Activated T-helper 1 cell treated with anti-CD3 and anti-CD28 coated beads, Interleukin-12 subunit alpha, Interleukin-12 subunit beta, Interleukin-2, Interleukin-4 antibody, amounts not matched to agents 30 ng/mL and 10 ng/mL and 1 ng/mL, durations not matched to agents 14 hours and 24 hours and 36 hours (primary cell): ENCODE measurements at regions of chr10 and their contacts with region 1.

Region 1: GRCh38 chr10:101441541-101442455 is 87.8 kb downstream of the BTRC start:
- DNase-seq: no peak
- H3K4me3 Mint-ChIP-seq: no peak overlapping the region
- H3K27ac Mint-ChIP-seq: no peak overlapping the region
- H3K4me1 Mint-ChIP-seq: no peaks in the 10 kb centered on the region
- H3K27me3 Mint-ChIP-seq: no peaks in the 10 kb centered on the region

Region 2: GRCh38 chr10:100986952-100987750 is 454.6 kb before region 1 on chr10 and contains the starts of genes MRPL43 and TWNK:
- intact Hi-C with region 1: no loop called
- DNase-seq: peak; percentile 80
- H3K4me3 Mint-ChIP-seq: peak within 1 kb of the TSS; percentile 98
- H3K27ac Mint-ChIP-seq: peak within 1 kb of the TSS; percentile 85
- H3K4me1 Mint-ChIP-seq: peaks cover 24% of the 10 kb centered on the region
- H3K27me3 Mint-ChIP-seq: no peaks in the 10 kb centered on the region
- total RNA-seq, gene MRPL43: 61.5 and 63.2 TPM in 2 replicates
- total RNA-seq, gene TWNK: 41.1 and 42.3 TPM in 2 replicates

Region 3: GRCh38 chr10:101161494-101162299 is 280.1 kb before region 1 on chr10:
- intact Hi-C with region 1: loop called (anchors 5 kb)
- DNase-seq: peak; percentile 44
- H3K4me3 Mint-ChIP-seq: no peak overlapping the region
- H3K27ac Mint-ChIP-seq: peak overlapping the region; percentile 30
- H3K4me1 Mint-ChIP-seq: peaks cover 11% of the 10 kb centered on the region
- H3K27me3 Mint-ChIP-seq: peaks cover 63% of the 10 kb centered on the region

Region 4: DNA sequence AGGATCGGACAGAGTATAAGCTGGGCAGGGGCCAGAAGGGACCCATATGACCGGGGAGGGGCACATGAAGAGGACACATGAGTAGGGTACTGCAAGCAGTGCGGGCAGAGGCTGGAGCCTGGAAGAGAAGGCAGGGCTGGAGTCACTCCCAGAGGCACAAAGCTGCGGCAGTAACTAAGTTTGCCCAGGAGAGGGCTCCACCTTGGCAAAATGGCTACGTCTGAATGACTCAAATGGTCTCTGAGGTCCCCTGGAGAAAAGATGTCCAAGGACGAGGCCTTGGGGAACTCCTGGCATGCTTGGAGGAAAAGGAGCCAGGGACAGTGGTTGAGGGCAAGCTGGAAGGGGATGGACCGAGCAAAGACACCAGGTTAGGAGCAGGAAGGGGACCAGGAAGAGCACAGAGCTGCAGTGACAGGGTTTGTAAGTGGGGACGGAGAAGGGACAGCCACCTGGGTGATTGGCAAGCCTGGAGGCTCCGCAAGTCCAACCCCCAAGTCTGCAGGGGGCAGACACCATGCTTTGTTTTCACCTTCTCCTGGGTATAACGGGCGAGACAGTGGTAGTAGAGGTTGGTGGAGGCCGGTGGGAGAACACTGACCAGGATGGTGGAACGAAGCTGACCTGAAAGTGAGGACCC is 169.4 kb before region 1 on chr10:
- intact Hi-C with region 1: loop called (anchors 1 kb)
- DNase-seq: peak; percentile 40
- H3K4me3 Mint-ChIP-seq: no peak overlapping the region
- H3K27ac Mint-ChIP-seq: no peak overlapping the region
- H3K4me1 Mint-ChIP-seq: no peaks in the 10 kb centered on the region
- H3K27me3 Mint-ChIP-seq: peaks cover 19% of the 10 kb centered on the region

Region 5: DNA sequence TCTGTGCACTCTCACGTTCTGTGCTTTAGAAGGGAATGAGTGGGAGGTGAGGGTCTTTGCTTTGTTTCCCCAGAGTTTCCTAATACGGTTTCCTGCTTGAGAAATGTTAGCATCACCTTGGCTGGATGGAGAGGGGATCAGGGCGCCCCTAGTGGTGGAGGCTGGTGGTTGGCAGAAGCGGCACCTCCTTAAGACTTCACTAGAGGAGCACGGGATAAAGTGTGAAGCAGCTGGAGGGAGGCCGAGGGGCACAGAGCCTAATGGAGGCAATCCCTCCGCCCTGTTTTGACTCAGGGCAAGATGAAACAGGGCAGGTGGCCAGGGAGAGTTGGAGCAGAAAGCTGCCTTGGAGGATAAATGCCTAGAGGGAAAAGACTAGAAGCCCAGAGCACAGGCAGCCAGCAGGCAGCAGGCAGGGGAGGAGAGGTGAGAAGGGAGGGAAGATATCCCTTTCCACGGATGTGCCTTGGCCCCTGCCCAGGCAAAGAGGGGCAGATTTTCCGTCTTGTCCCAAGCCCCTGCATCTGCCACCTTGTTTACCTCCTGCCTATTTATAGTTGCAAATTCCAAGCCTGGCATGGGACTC is 143.8 kb before region 1 on chr10:
- intact Hi-C with region 1: loop called (anchors 1 kb)
- DNase-seq: peak; percentile 46
- H3K4me3 Mint-ChIP-seq: no peak overlapping the region
- H3K27ac Mint-ChIP-seq: no peak overlapping the region
- H3K4me1 Mint-ChIP-seq: no peaks in the 10 kb centered on the region
- H3K27me3 Mint-ChIP-seq: peaks cover 48% of the 10 kb centered on the region

Region 6: GRCh38 chr10:101380353-101381017 is 61.3 kb before region 1 on chr10:
- intact Hi-C with region 1: no loop called
- DNase-seq: no peak
- H3K4me3 Mint-ChIP-seq: no peak overlapping the region
- H3K27ac Mint-ChIP-seq: peak overlapping the region; percentile 84
- H3K4me1 Mint-ChIP-seq: peaks cover 9% of the 10 kb centered on the region
- H3K27me3 Mint-ChIP-seq: no peaks in the 10 kb centered on the region